Activated CD8-positive, alpha-beta memory T cell treated with anti-CD3 and anti-CD28 coated beads, Interleukin-2, amount 10 ng/mL, durations not matched to agents 7 days and 5 days (primary cell): ENCODE measurements at regions of chr2 and their contacts with region 1.

Region 1: DNA sequence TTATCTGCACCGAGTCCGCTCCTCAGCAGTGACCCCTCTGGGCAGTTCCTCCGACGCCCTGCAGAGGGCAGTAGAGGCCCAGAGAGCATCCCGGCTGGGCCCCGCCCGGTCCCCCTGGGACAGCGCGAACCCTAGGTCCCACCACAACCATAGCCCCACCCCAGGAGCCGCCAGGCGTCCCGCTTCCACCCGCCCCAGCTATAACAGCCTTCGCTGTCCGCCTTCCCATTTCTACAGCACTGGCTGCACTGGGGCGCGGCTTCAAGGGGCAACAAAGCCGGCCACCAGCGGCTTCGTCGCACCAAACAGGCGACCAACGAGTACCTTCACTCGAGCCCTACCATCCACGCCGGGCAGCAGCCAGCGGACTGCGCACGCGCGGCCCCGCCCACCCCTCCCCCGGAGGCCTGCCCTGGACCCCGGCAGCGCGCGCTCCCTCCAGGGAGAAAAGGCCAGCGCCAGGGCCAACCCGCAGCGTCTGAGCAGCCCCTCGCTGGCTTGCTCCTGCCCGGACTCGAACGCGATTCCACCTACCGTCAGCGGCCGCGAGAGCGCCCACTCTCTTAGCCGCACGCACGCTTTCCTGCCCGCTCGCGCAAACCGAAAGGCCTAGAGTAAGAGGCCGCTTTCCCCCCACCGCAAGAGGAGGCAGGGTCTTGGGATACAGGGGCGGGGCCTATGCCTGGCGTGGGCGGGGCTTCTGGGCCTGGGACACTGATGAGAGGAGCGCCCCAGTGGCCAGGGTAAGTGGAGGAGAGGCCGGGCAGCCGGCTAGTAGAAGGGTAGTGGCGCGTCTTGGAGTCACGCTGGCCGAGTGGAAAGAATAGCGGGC is at the start of gene NHEJ1:
- DNase-seq: peak; percentile 96
- ATAC-seq: peak; percentile 87
- H3K4me3 Mint-ChIP-seq: peak within 1 kb of the TSS; percentile 80
- H3K27ac Mint-ChIP-seq: peak within 1 kb of the TSS; percentile 93
- H3K4me1 Mint-ChIP-seq: peaks cover 19% of the 10 kb centered on the region
- H3K27me3 Mint-ChIP-seq: no peaks in the 10 kb centered on the region
- total RNA-seq, gene NHEJ1: 14.4 to 19.4 TPM

Region 2: GRCh38 chr2:218659258-218659987 is 501.0 kb before region 1 on chr2 and contains the starts of genes BCS1L and ZNF142:
- CTCF ChIA-PET with region 1: no interaction called
- DNase-seq: peak; percentile 97
- ATAC-seq: peak; percentile 97
- H3K4me3 Mint-ChIP-seq: peak within 1 kb of the TSS; percentile 90
- H3K27ac Mint-ChIP-seq: peak within 1 kb of the TSS; percentile 86
- H3K4me1 Mint-ChIP-seq: peaks cover 38% of the 10 kb centered on the region
- H3K27me3 Mint-ChIP-seq: no peaks in the 10 kb centered on the region
- total RNA-seq, gene BCS1L: 55.2 to 67.6 TPM
- total RNA-seq, gene ZNF142: 54.2 to 55.4 TPM

Region 3: DNA sequence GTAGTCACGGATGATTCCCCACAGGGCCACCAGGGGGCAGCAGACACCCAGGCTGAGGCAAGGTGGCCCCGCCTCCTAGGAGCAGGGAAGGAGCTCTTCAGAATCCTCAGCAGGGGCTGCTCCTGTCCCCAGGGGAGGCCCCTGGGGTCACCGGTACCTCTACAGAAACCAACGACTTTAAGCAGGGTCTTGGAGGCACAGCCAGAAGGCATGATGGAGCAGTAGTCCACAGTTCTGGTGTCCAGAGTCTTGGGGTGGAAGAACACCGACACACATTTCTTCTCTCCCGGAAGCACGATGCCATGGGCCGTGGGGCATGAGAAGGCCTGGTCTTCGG is 130.6 kb before region 1 on chr2:
- CTCF ChIA-PET with region 1: interaction called, 24 read pairs
- DNase-seq: peak; percentile 78
- ATAC-seq: peak; percentile 88
- H3K4me3 Mint-ChIP-seq: no peak overlapping the region
- H3K27ac Mint-ChIP-seq: no peak overlapping the region
- H3K4me1 Mint-ChIP-seq: no peaks in the 10 kb centered on the region
- H3K27me3 Mint-ChIP-seq: peaks cover 25% of the 10 kb centered on the region

Region 4: GRCh38 chr2:219206442-219207253 is 46.2 kb after region 1 on chr2 and contains the start of gene ZFAND2B:
- CTCF ChIA-PET with region 1: interaction called, 92 read pairs
- DNase-seq: peak; percentile 96
- ATAC-seq: peak; percentile 95
- H3K4me3 Mint-ChIP-seq: peak within 1 kb of the TSS; percentile 81
- H3K27ac Mint-ChIP-seq: peak within 1 kb of the TSS; percentile 93
- H3K4me1 Mint-ChIP-seq: peaks cover 53% of the 10 kb centered on the region
- H3K27me3 Mint-ChIP-seq: no peaks in the 10 kb centered on the region
- total RNA-seq, gene ZFAND2B: 60.2 to 60.6 TPM

Region 5: DNA sequence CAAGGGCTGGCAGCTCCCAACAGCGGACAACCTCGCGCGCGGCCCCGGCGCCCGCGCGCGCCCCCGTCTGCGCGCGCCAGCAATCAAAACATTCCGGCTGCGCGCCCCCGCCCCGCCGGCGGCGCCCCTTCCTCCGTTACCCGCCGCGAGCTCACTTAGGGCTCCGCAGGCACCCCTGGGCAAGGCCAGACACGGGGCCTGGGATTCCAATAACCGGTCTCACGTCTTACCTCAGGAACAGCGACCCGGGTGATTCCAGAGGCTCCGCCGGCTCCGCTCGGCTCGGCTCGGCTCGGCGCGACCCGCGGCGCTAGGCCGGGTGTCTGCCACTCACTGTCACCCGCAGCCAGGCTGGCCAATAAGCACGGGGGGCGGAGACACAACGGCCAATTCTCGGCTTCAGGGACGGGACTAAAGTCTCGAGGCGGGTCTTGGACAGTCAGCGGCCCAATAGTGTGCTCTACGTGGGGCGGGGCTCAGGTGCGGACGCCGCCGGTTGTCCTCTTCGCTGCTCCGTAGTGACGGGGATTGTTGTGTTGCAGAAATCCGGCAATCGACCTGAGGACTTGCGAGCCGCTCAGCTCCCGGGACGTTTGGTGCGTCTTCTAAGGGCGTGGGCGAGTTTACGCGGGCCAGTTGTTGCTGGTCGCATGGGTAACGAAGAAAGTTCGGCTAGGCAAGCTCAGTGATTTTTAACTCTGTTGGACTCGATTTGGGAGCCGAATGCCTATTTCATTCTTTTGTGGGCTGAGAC is 69.1 kb after region 1 on chr2 and contains the starts of genes ANKZF1 and ATG9A:
- CTCF ChIA-PET with region 1: interaction called, 11 read pairs
- DNase-seq: peak; percentile 100
- ATAC-seq: peak; percentile 98
- H3K4me3 Mint-ChIP-seq: peak within 1 kb of the TSS; percentile 98
- H3K27ac Mint-ChIP-seq: peak within 1 kb of the TSS; percentile 95
- H3K4me1 Mint-ChIP-seq: peaks cover 65% of the 10 kb centered on the region
- H3K27me3 Mint-ChIP-seq: no peaks in the 10 kb centered on the region
- total RNA-seq, gene ANKZF1: 89.4 to 105 TPM
- total RNA-seq, gene ATG9A: 56.6 to 60.7 TPM

Region 6: GRCh38 chr2:219253753-219254590 is 93.6 kb after region 1 on chr2 and contains the start of gene TUBA4A:
- CTCF ChIA-PET with region 1: interaction called, 16 read pairs
- DNase-seq: peak; percentile 92
- ATAC-seq: peak; percentile 76
- H3K4me3 Mint-ChIP-seq: peak within 1 kb of the TSS; percentile 99
- H3K27ac Mint-ChIP-seq: peak within 1 kb of the TSS; percentile 97
- H3K4me1 Mint-ChIP-seq: peaks cover 44% of the 10 kb centered on the region
- H3K27me3 Mint-ChIP-seq: peaks cover 3% of the 10 kb centered on the region
- total RNA-seq, gene TUBA4A: 244 to 337 TPM

Region 7: GRCh38 chr2:219430633-219431615 is 270.5 kb after region 1 on chr2:
- CTCF ChIA-PET with region 1: no interaction called
- DNase-seq: no peak
- ATAC-seq: no peak
- H3K4me3 Mint-ChIP-seq: no peak overlapping the region
- H3K27ac Mint-ChIP-seq: no peak overlapping the region
- H3K4me1 Mint-ChIP-seq: no peaks in the 10 kb centered on the region
- H3K27me3 Mint-ChIP-seq: peaks cover 27% of the 10 kb centered on the region